CD8-positive, alpha-beta T cell (primary cell): ENCODE measurements at regions of chr2 and their contacts with region 1.

Region 1: DNA sequence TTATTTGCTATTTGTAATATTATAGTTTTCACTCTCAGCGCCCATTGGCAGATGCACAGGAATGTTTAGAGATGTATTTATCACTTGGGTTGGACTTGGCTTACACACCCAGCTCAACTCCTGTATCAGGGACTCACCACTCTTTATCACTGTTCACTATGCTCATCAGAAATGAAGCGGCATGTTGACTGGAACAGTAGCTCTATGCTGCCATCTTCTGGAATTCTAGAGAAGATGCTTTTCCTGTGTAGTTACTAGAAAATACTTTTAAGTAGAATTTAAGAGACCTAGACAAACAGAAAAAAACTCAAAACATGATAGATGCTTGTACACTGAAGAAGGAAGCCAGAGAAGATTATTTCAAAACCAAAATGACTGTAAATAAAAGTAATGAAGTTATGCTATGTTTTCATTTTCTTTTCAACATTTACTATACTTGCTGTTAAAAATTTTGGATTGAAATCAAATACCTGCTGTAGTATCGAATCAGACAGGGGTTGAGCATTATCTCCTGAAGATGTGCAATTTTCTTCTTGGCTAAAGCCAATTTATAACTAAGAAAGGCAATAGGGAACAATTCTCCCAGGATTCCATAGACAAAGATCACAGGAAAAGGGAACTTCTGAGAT is 47.4 kb upstream of the NXPH2 start:
- DNase-seq: peak in 3 of 9 experiments; percentile 13 to 64 (median 54)
- ATAC-seq: no peak
- H3K4me3 ChIP-seq: no peak overlapping the region
- H3K4me3 Mint-ChIP-seq: no peak overlapping the region
- H3K27ac ChIP-seq: no peak overlapping the region
- H3K27ac Mint-ChIP-seq: no peak overlapping the region
- H3K4me1 ChIP-seq: no peaks in the 10 kb centered on the region
- H3K4me1 Mint-ChIP-seq: no peaks in the 10 kb centered on the region
- H3K27me3 ChIP-seq: no peaks in the 10 kb centered on the region
- H3K27me3 Mint-ChIP-seq: peaks cover 7% of the 10 kb centered on the region
- CTCF ChIP-seq: peak; percentile 69

Region 2: DNA sequence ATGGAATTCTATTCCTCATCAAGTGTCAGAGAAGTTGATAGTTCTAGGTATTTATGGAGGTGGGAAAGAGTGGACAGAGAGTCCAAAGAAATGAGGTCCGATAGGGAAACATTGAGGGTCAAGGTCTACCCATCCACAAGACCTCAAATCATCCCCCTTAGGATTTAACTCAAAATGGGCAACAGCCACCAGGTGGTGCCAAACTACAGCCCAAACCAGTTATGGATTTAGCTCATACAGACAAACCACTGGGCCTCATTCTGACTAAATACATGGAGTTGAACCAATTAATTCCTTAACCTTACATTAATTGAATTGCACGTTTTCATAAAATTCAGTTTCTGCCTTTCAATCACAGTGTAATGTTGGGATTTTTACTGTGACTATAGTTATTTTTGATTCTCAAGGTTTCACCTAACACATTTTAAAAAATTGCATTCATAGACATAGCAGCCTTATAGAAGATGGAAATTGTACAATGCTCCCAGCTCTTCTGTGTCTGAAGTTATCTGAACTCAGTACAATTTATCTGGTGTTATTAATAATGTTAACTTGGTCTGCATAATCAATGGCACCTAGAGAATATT is 961.5 kb before region 1 on chr2:
- CTCF ChIA-PET with region 1: interaction called, 13 read pairs
- POLR2A ChIA-PET with region 1: no interaction called
- intact Hi-C with region 1: loop called in 1 of 2 experiments (anchors 1 kb)
- DNase-seq: peak in 8 of 9 experiments; percentile 7 to 52 (median 42)
- ATAC-seq: no peak
- H3K4me3 ChIP-seq: no peak overlapping the region
- H3K4me3 Mint-ChIP-seq: no peak overlapping the region
- H3K27ac ChIP-seq: no peak overlapping the region
- H3K27ac Mint-ChIP-seq: no peak overlapping the region
- H3K4me1 ChIP-seq: no peaks in the 10 kb centered on the region
- H3K4me1 Mint-ChIP-seq: no peaks in the 10 kb centered on the region
- H3K27me3 ChIP-seq: no peaks in the 10 kb centered on the region
- H3K27me3 Mint-ChIP-seq: no peaks in the 10 kb centered on the region
- CTCF ChIP-seq: peak; percentile 60

Region 3: GRCh38 chr2:137910641-137911040 is 916.9 kb before region 1 on chr2:
- CTCF ChIA-PET with region 1: interaction called, 10 read pairs
- POLR2A ChIA-PET with region 1: no interaction called
- intact Hi-C with region 1: loop called in 1 of 2 experiments (anchors 2 kb)
- DNase-seq: peak in 1 of 9 experiments; percentile 2
- ATAC-seq: no peak
- H3K4me3 ChIP-seq: no peak overlapping the region
- H3K4me3 Mint-ChIP-seq: no peak overlapping the region
- H3K27ac ChIP-seq: no peak overlapping the region
- H3K27ac Mint-ChIP-seq: no peak overlapping the region
- H3K4me1 ChIP-seq: no peaks in the 10 kb centered on the region
- H3K4me1 Mint-ChIP-seq: no peaks in the 10 kb centered on the region
- H3K27me3 ChIP-seq: no peaks in the 10 kb centered on the region
- H3K27me3 Mint-ChIP-seq: no peaks in the 10 kb centered on the region
- CTCF ChIP-seq: no peak

Region 4: GRCh38 chr2:137947728-137948336 is 879.7 kb before region 1 on chr2:
- CTCF ChIA-PET with region 1: interaction called, 10 read pairs
- POLR2A ChIA-PET with region 1: no interaction called
- intact Hi-C with region 1: loop called in 1 of 2 experiments (anchors 2 kb)
- DNase-seq: peak in 5 of 9 experiments; percentile 20 to 36 (median 21)
- ATAC-seq: no peak
- H3K4me3 ChIP-seq: no peak overlapping the region
- H3K4me3 Mint-ChIP-seq: no peak overlapping the region
- H3K27ac ChIP-seq: no peak overlapping the region
- H3K27ac Mint-ChIP-seq: no peak overlapping the region
- H3K4me1 ChIP-seq: no peaks in the 10 kb centered on the region
- H3K4me1 Mint-ChIP-seq: peaks cover 2% of the 10 kb centered on the region
- H3K27me3 ChIP-seq: no peaks in the 10 kb centered on the region
- H3K27me3 Mint-ChIP-seq: no peaks in the 10 kb centered on the region
- CTCF ChIP-seq: no peak

Region 5: DNA sequence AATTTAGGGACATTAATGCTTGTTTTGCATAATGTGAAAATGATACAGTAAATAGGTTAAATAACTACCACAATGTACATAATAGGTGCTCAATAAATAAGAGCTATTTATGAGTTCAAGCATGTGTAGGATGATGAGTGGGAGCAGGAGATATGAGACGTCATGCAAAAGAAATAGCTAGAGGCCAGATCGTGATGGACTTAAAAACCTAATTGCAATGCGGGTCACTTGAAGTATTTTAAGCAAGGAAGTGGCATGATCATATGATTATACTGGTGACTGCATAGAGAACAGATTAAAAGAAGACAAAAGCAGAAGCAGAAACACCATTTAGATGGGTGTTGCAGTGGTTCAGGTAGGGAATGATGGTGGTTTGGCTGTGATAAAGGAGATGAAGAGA is 785.2 kb before region 1 on chr2:
- CTCF ChIA-PET with region 1: no interaction called
- POLR2A ChIA-PET with region 1: no interaction called
- intact Hi-C with region 1: no loop called
- DNase-seq: no peak
- ATAC-seq: no peak
- H3K4me3 ChIP-seq: no peak overlapping the region
- H3K4me3 Mint-ChIP-seq: no peak overlapping the region
- H3K27ac ChIP-seq: no peak overlapping the region
- H3K27ac Mint-ChIP-seq: no peak overlapping the region
- H3K4me1 ChIP-seq: no peaks in the 10 kb centered on the region
- H3K4me1 Mint-ChIP-seq: no peaks in the 10 kb centered on the region
- H3K27me3 ChIP-seq: no peaks in the 10 kb centered on the region
- H3K27me3 Mint-ChIP-seq: no peaks in the 10 kb centered on the region
- CTCF ChIP-seq: no peak

Region 6: GRCh38 chr2:138476940-138477339 is 350.6 kb before region 1 on chr2:
- CTCF ChIA-PET with region 1: interaction called, 4 read pairs
- POLR2A ChIA-PET with region 1: no interaction called
- intact Hi-C with region 1: loop called in 1 of 2 experiments (anchors 2 kb)
- DNase-seq: peak in 1 of 9 experiments; percentile 7
- ATAC-seq: no peak
- H3K4me3 ChIP-seq: no peak overlapping the region
- H3K4me3 Mint-ChIP-seq: no peak overlapping the region
- H3K27ac ChIP-seq: no peak overlapping the region
- H3K27ac Mint-ChIP-seq: no peak overlapping the region
- H3K4me1 ChIP-seq: no peaks in the 10 kb centered on the region
- H3K4me1 Mint-ChIP-seq: no peaks in the 10 kb centered on the region
- H3K27me3 ChIP-seq: no peaks in the 10 kb centered on the region
- H3K27me3 Mint-ChIP-seq: peaks cover 4% of the 10 kb centered on the region
- CTCF ChIP-seq: no peak